ENCODE measurements at regions of chr15 and their contacts with region 1.

Region 1: DNA sequence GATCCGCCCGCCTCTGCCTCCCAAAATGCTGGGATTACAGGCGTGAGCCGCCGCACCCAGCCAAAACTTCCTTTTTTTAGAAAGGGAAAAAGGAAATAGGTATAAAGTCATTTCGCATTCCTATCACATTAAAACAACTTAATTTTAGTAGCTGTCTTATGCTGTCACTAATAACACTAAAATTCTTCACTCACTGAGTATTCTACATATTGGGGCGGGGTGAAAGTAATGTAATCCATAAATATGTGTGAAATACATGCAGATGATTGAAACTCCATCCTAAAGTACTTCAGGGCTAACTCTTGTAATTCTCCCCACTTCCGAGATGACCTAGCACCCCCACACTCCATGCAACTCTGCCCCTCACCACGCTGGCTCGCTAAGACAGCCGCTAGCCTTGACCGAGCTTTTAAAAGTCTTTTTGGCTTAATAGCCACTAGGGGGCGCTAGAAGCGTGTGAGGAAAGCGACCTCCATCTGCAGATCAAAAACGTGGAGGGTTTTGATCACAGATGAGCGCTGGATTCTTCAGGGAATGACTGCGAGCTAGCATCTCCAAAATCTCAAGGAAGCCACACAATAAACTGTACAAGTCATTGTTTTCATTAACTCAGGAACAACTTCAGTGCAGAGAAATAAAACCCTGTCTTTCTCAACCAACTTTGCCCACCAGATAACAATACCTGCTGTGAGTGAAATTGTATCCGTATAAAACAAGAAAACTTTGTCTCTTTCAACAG is 129.3 kb upstream of the IGF1R start:
- DNase-seq: peak; percentile 52
- H3K4me3 ChIP-seq: no peak overlapping the region
- H3K27ac ChIP-seq: no peak overlapping the region
- H3K27me3 ChIP-seq: no peaks in the 10 kb centered on the region
- CTCF ChIP-seq: peak; percentile 82

Region 2: DNA sequence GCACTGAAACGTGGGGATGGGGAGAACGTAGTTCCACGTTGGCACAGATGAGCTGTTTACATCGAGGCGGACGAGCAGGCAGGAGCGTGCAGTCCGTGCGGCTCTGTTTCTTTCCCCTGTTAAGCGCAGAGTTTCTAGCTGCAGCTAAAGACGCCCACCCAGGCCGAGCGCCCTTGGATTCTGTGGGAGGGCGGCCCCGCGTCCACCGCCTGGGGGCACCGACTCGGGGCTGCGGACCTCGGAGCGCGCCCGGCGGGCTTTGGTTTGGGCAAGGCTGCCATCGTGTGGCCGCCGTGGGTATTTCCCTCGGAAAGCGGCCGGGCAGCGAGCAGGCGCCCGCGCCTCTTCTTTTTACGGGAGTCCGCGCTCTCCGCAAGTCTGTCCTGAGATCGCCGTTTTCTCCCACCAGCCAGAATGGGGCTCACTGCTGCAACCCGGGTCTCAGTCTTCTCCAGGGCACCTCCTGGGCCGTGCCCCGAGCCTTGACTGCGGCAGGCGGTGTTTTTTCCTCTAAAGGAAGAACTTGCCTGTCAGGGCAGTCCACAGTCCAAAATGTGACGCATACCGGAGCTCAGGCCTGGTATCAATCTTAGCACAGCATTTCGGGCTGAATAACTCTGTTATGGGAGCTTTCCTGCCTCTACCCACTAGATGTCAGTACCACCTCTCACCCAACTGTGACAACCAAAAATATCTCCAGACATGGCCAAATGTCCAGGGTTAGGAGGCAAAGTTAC is 90.6 kb before region 1 on chr15:
- CTCF ChIA-PET with region 1: interaction called, 13 read pairs
- POLR2A ChIA-PET with region 1: no interaction called
- DNase-seq: no peak
- H3K4me3 ChIP-seq: peak overlapping the region; percentile 50
- H3K27ac ChIP-seq: no peak overlapping the region
- H3K27me3 ChIP-seq: peaks cover 9% of the 10 kb centered on the region
- CTCF ChIP-seq: peak; percentile 69

Region 3: DNA sequence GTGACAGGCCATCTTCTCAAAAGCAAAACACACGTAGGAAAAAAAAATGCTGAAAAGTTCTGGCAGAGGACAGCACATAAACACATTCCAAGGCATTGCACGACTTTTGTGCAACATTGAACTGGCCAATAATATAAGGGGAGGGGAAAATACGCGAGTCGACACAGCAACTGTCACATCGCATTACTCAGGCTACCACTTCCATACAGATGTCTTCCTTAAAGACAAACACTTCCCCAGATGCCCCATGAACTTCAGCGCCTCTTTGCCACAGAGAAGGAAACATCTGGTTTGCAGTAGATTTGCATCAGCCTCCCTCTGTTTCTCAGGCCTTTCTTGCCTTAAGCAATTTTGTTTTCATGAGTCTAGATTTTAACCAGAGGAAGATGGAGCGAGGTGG is 15.0 kb before region 1 on chr15:
- CTCF ChIA-PET with region 1: interaction called, 12 read pairs
- POLR2A ChIA-PET with region 1: no interaction called
- DNase-seq: no peak
- H3K4me3 ChIP-seq: no peak overlapping the region
- H3K27ac ChIP-seq: no peak overlapping the region
- H3K27me3 ChIP-seq: peaks cover 13% of the 10 kb centered on the region
- CTCF ChIP-seq: no peak

Region 4: DNA sequence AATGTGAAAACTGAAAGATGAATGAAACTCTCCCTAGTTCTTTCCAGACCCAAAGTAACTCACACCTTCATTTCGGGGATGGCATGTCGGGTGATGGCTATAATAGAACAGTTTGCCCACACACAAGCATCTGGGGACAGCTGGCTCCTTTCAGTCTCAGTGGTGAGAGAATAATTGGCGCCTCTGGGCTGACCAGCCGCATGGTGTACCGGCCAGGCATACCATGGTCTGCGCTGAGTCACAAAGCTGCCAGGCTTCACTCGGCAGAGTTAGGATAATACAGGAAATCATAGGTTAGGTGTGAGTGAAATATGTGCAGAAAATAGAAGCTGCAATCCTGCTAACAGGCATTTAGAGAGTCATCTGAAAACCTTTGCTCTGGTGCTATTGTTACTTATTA is 49.0 kb after region 1 on chr15:
- CTCF ChIA-PET with region 1: interaction called, 11 read pairs
- POLR2A ChIA-PET with region 1: no interaction called
- DNase-seq: no peak
- H3K4me3 ChIP-seq: no peak overlapping the region
- H3K27ac ChIP-seq: no peak overlapping the region
- H3K27me3 ChIP-seq: no peaks in the 10 kb centered on the region
- CTCF ChIP-seq: no peak

Region 5: DNA sequence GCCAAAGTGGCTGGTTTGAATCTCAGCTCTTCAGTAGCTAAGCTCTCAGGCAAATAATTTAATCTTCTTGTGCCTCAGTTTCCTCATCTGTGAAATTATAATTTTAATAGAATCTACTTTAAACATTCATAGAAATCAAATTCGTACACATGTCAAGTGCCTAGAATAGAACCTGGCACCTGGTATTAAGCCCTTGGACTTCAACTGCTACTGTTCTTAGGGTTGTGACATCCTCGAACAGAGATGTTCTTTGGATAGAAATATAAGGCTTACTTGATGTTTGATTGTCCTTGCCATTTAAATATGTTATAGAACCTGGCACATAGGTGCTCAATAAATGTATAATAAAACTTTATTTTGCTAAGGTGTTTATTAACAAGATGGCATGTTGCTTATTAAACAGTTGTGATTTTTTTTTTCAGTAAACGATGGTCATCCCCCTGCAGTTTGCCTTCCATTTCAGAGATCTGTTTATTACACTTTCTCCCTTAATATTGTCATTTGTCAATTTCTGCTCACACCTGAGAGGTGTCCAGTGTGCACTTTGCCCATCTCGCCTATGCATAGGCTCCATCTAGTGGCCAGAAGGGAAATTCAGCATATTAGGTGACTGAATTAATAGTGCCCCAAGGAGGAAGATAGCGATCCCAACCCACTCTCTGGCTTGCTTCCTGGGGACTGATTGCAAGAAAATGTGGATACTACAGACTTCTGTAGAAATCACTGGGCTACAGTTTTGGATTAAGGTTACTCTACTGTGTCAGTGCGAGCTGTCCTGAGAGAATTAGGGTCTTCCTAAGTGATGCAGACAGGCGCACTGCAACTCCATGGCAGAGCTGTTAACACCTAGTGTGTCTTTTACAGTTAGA is 140.1 kb after region 1 on chr15:
- CTCF ChIA-PET with region 1: interaction called, 46 read pairs
- POLR2A ChIA-PET with region 1: no interaction called
- DNase-seq: no peak
- H3K4me3 ChIP-seq: no peak overlapping the region
- H3K27ac ChIP-seq: no peak overlapping the region
- H3K27me3 ChIP-seq: no peaks in the 10 kb centered on the region
- CTCF ChIP-seq: peak; percentile 93

Region 6: GRCh38 chr15:98904544-98904943 is 385.6 kb after region 1 on chr15:
- CTCF ChIA-PET with region 1: interaction called, 16 read pairs
- POLR2A ChIA-PET with region 1: no interaction called
- DNase-seq: peak; percentile 39
- H3K4me3 ChIP-seq: no peak overlapping the region
- H3K27ac ChIP-seq: no peak overlapping the region
- H3K27me3 ChIP-seq: no peaks in the 10 kb centered on the region
- CTCF ChIP-seq: peak; percentile 78